PC-3 (cell line): ENCODE measurements at regions of chr7 and their contacts with region 1.

Region 1: DNA sequence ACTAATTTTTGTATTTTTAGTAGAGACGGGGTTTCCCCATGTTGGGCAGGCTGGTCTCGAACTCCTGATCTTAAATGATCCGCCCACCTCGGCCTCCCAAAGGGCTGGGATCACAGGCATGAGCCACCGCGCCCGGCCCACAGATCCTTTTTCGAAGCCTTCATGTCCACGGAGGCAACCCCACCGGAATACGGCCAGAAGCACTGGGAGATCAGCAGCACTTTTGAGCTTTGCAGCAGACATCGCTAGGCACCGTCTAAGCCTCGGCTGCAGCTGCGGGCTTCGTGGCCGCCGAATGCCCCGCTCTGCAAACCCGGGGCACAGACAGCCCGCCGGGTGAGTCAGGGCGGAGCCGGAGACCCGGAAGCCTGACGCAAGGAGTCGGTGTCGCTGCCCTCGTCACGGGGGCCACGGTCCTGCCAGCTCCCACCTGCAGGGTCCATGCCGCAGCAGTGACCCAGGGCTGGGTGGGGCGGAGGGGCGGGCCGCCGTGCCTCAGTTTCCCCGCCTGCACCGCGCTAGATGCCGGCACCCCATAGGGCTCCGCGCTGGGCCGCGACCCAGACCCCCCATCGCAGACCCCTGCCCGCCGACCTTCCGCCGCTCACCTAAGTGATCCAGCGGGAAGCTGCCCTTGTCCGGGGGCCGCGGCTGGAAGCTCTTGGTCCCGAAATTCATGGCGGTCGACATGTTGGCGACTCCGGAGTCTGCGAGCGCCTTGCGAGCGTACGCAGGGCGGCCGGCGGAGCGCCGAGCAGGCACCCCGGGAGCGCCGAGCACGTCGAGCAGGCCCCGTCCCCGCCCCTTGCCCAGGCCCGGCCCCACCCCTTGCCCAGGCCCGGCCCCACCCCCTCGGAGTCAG is at the start of gene COX19:
- DNase-seq: peak; percentile 83
- ATAC-seq: peak; percentile 93
- H3K4me3 ChIP-seq: peak within 1 kb of the TSS; percentile 93
- H3K27ac ChIP-seq: peak within 1 kb of the TSS; percentile 75
- H3K4me1 ChIP-seq: 0 out of 2 replicates have a peak, but pooled peaks cover 4% of the 10 kb centered on the region
- H3K27me3 ChIP-seq: no peaks in the 10 kb centered on the region
- CTCF ChIP-seq: no peak
- total RNA-seq, gene COX19: 11.6 and 12.4 TPM in 2 replicates

Region 2: DNA sequence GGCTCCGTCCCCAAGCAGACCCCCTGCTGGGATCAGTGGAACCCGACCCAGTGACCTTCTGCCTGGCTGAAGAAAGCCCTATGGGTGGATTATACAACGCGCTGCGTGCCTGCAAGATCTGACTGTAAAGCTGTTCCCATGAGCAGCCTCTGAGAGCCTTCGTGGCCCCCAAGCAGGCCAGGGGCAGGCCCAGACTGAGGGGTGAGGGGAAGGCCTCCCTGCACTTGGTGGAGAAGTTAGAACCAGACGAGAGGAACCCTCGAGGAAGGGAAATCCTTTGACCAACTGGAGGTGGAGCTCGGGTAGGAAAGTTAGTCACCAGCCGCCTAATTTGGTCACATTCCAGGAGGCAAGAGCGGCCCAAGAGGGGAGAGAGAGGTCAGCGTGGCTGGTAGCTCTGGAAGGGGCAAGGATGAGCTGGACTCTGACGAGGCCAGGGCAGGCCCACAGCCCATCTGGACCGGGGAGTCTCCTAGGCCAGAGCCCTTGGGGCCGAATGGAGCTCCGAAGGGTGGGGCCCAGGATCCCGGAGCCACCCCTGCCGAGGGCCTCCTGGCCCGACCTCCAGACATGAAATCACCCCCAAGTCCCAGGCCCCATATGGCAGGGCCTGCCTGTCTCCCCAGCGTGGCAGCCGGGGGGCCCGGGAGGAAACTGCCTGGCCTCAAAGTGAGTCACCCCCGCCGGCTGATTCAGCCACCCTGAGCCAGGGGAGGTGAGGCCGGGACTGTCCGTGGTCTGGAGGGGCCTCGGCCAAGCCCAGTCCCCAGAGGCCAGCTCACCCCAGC is 432.1 kb before region 1 on chr7:
- CTCF ChIA-PET with region 1: no interaction called
- POLR2A ChIA-PET with region 1: interaction called, 11 read pairs
- intact Hi-C with region 1: no loop called
- DNase-seq: peak; percentile 81
- ATAC-seq: peak; percentile 49
- H3K4me3 ChIP-seq: no peak overlapping the region
- H3K27ac ChIP-seq: peak overlapping the region; percentile 88
- H3K4me1 ChIP-seq: peaks cover 54% of the 10 kb centered on the region
- H3K27me3 ChIP-seq: no peaks in the 10 kb centered on the region
- CTCF ChIP-seq: no peak

Region 3: DNA sequence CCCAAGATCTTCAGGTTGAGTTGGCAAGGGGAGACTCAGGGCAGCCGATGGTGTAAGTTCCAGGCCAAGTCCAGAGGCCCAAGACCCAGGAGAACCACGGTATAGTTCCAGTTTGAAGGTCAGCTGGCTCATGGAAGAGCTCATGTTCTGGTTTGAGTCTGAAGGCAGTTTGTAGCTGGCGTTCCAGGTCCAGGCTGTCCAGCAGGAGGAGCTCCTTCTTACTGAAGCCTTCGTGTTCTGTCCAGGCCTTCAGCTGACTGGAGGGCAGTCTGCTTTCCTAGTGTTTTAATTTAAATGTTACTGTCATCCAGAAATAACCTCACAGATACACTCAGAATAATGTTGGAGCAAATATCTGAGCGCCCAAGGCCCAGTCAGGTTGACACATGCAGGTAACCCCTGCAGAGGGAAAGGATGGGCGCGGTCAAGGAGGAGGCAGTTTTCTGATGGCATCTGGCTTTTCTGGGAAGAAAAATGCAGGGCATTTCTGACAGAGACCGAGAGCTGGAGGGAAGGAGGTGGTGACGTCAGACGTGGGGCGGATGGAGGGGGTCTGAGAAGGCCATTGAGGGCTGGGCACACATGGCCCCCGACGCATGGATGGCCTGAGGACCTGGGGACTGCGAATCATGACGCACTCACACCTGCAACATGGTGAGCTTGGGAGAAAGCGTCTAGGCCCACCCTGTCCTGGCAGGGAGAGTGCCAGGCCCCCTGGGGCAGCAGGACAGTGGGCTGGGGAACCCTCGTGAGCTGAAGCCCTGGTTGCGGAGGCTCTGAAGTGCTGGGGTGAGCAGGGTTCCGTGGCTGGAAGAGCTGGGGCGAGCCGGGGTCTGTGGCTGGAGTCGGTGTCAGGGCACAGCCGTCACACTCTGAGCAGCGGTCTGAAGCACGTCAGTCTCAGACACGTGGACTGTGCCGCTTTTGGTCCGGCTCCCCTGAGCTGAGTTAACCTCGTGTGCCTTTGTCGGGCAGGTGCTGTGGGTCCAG is 138.3 kb before region 1 on chr7:
- CTCF ChIA-PET with region 1: no interaction called
- POLR2A ChIA-PET with region 1: no interaction called
- intact Hi-C with region 1: no loop called
- DNase-seq: no peak
- ATAC-seq: peak; percentile 14
- H3K4me3 ChIP-seq: peak overlapping the region; percentile 10; the same call in 1 of the 2 replicates
- H3K27ac ChIP-seq: peak overlapping the region; percentile 86
- H3K4me1 ChIP-seq: peaks cover 39% of the 10 kb centered on the region
- H3K27me3 ChIP-seq: no peaks in the 10 kb centered on the region
- CTCF ChIP-seq: peak; percentile 68

Region 4: GRCh38 chr7:1017586-1018333 is 42.7 kb after region 1 on chr7:
- CTCF ChIA-PET with region 1: no interaction called
- POLR2A ChIA-PET with region 1: no interaction called
- intact Hi-C with region 1: no loop called
- DNase-seq: no peak
- ATAC-seq: no peak
- H3K4me3 ChIP-seq: no peak overlapping the region
- H3K27ac ChIP-seq: no peak overlapping the region
- H3K4me1 ChIP-seq: no peaks in the 10 kb centered on the region
- H3K27me3 ChIP-seq: no peaks in the 10 kb centered on the region
- CTCF ChIP-seq: no peak

Region 5: DNA sequence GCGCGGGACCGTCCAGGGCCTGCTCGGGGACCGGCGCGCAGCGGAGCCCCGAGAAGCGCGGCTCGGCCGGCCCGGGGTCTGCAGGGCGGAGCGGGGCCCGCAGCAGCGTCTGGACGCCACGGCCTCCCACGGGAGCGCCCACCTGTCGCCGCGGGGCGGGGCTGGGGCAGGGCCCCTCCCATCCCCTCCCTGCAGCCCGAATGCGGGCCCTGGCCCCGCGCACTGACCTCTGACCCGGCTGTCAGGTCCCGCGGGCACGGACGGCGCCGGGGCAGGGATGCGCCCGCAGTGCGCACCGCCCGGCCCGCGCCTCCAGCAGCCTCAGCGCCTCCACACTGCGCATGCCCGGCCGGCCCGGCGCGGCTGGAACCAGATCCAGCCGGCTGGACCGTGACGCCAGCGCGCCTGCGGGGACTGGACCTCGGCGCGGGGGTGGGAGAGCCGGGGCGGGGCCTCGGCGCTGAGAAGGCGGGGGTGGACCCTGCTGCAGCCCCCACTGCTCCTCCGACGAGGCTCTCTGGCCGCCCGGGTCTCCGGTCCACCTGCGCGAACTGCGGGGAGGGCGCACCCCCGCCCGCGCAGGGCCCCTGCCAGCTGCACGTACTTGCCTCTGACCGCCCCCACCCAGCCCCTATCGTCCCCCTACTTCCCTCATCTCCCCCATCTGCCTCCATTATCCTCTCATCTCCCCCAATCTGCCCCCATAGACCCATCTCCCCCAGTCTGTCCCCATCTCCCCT is 53.1 kb after region 1 on chr7:
- CTCF ChIA-PET with region 1: no interaction called
- POLR2A ChIA-PET with region 1: interaction called, 21 read pairs
- intact Hi-C with region 1: no loop called
- DNase-seq: peak; percentile 92
- ATAC-seq: peak; percentile 75
- H3K4me3 ChIP-seq: peak overlapping the region; percentile 96
- H3K27ac ChIP-seq: peak overlapping the region; percentile 85
- H3K4me1 ChIP-seq: peaks cover 14% of the 10 kb centered on the region
- H3K27me3 ChIP-seq: no peaks in the 10 kb centered on the region
- CTCF ChIP-seq: no peak